Left colon (tissue), 2 donors: ENCODE measurements at regions of chr3 and their contacts with region 1.

Region 1: DNA sequence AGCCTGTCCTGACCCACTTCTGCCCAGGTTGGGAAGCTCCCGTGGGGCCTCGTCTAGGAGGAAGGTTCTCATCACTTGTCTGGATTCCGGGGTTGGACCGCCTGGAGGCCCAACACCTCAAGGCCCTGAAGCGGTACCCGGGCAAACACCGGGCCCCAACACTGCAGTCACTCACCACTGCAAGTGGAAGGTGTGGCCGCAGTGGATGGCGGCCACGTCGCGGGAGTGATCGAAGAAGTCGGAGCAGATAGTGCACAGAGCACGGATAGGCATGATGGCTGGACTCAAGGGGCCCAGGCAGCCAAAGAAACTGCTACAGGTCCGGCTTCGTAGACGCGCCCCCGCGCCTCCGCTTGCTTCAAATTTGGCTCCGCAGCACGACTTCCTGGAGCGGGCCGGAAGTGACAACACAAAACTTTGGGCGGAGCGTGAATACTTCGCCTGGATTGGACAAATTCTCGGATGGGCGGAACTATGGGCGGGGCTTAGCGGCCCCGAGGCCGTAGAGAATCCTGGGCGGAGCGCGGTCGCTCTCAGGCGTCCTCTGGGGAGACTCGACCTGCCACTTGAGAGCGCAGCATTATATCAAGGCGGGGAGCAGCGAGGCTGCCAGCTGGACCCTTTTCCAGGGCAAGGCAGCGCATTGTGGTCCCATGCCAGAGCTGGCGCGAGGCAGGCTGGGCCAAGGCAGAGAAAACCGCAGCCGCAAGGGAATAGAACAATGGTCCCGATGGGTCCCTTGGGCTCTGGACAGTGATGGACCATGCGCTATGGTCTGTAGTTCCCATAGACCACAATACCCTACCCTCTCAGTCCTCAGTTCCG is at the start of gene TRAIP:
- DNase-seq: peak; percentile 93 to 97
- ATAC-seq: peak; percentile 100
- total RNA-seq, gene TRAIP: 3.2 to 5.3 TPM

Region 2: GRCh38 chr3:49719214-49719884 is 137.0 kb before region 1 on chr3 and contains the start of gene AMIGO3:
- intact Hi-C with region 1: loop called in 1 of 2 experiments (anchors 10 kb)
- DNase-seq: peak; percentile 96 to 99
- ATAC-seq: peak; percentile 60
- total RNA-seq, gene AMIGO3: not detected

Region 3: GRCh38 chr3:49733551-49733950 is 122.8 kb before region 1 on chr3:
- intact Hi-C with region 1: no loop called
- DNase-seq: no peak
- ATAC-seq: no peak